ENCODE measurements at regions of chr16 and their contacts with region 1.

Region 1: GRCh38 chr16:75432828-75433731 is at the start of gene CFDP1:
- DNase-seq: peak; percentile 96 to 97
- H3K4me3 ChIP-seq: peak within 1 kb of the TSS; percentile 81
- H3K4me3 Mint-ChIP-seq: peak within 1 kb of the TSS; percentile 81
- H3K27ac Mint-ChIP-seq: peak within 1 kb of the TSS; percentile 88
- H3K4me1 ChIP-seq: no peaks in the 10 kb centered on the region
- H3K4me1 Mint-ChIP-seq: peaks cover 14% of the 10 kb centered on the region
- H3K27me3 ChIP-seq: no peaks in the 10 kb centered on the region
- H3K27me3 Mint-ChIP-seq: no peaks in the 10 kb centered on the region
- CTCF ChIP-seq: peak in 1 of 2 experiments; percentile 13
- total RNA-seq, gene CFDP1: 71.6 and 77.6 TPM in 2 replicates

Region 2: DNA sequence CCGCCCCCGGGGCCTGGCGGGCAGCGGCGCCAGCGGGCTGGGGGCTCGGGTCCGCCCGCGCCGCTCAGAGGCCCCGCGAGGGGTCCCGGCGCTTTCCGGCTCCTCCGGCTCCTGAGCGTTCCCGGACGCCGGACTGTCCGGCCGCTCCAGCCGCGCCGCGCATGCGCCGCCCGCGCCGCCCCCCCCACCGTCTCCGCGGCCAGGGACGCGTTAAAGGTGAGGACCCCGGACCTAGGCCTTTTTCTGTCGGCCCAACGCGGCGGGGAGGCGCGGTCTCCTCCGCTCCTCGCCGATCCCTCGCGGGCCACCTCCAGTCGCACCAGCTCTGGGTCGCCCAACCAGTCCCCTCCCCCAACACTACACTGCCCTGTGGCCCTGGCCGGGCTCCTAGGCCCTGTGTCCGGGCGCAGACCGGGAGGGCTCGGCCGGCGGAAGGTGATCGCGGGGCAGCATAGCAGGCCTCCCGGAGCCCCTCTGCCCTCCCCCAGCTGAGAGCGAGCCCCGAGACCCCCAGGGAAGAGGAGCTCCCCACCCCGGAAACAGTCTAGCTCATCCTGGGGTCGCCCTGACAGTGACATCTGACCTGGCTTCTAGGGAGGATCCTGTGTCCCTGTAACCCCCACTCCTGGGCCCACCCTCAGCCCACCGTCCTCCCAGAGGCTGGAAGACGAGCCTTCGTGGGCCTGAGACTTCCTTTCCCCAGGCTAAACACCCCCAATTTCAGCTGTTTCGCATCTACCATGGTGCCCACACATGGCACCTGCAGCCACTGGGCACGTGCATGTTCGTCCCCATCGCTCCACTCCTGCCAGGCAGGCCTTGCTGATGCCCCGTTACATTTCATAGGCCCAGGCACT is 167.0 kb before region 1 on chr16:
- CTCF ChIA-PET with region 1: no interaction called
- POLR2A ChIA-PET with region 1: no interaction called
- intact Hi-C with region 1: no loop called
- DNase-seq: peak; percentile 94 to 96
- H3K4me3 ChIP-seq: peak overlapping the region; percentile 89
- H3K4me3 Mint-ChIP-seq: peak overlapping the region; percentile 82
- H3K27ac Mint-ChIP-seq: peak overlapping the region; percentile 95
- H3K4me1 ChIP-seq: peaks cover 46% of the 10 kb centered on the region
- H3K4me1 Mint-ChIP-seq: peaks cover 21% of the 10 kb centered on the region
- H3K27me3 ChIP-seq: no peaks in the 10 kb centered on the region
- H3K27me3 Mint-ChIP-seq: no peaks in the 10 kb centered on the region
- CTCF ChIP-seq: peak in 1 of 2 experiments; percentile 19

Region 3: GRCh38 chr16:75687361-75687760 is 254.3 kb after region 1 on chr16:
- CTCF ChIA-PET with region 1: no interaction called
- POLR2A ChIA-PET with region 1: interaction called, 10 read pairs
- intact Hi-C with region 1: no loop called
- DNase-seq: no peak
- H3K4me3 ChIP-seq: no peak overlapping the region
- H3K4me3 Mint-ChIP-seq: no peak overlapping the region
- H3K27ac Mint-ChIP-seq: no peak overlapping the region
- H3K4me1 ChIP-seq: no peaks in the 10 kb centered on the region
- H3K4me1 Mint-ChIP-seq: no peaks in the 10 kb centered on the region
- H3K27me3 ChIP-seq: no peaks in the 10 kb centered on the region
- H3K27me3 Mint-ChIP-seq: no peaks in the 10 kb centered on the region
- CTCF ChIP-seq: no peak